Pancreas (tissue), 10 donors: ENCODE measurements at regions of chr22 and their contacts with region 1.

Region 1: DNA sequence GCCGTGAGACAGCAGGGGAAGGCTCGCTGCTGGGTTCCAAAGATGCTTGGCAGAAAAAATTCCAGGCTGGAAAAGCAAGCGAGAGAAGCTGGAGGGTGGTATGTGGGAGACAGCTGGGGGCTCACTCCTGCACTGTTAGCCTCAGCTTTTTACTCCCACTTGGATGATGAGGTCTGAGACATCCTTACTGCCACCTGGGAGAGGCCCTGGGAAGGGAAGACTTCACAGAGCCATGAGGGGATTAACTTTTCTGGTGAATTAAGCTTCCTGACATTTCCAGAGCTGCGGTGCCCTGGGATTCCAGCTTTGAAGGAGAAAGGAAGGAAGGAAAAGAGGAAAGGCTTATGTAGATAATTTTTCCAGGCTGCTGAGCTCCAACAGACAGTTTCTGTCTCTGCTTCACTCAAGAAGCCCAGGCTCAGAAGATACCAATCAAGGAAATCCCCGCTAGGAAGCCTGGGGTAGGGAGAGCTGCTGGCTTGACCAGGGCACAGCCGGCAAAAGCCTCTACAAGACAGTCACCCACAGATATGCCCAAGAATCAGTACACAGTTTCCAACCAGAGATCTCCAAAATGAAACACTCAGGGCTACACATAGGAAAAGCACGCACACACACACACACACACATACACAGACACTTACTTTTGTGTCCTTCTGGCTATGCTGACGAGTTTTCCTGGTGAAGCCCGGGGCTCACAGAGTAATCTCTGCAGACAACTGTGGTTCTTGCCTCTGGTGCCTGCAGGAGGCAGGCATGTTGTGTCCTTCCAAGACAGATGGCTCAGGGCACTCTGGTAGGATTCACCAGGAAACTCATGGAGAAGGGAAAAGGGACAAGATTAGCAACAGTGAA is 907 bp downstream of the MCHR1 start:
- DNase-seq: no peak
- ATAC-seq: no peak
- H3K4me3 ChIP-seq: no peak overlapping the region
- H3K27ac ChIP-seq: no peak overlapping the region
- H3K4me1 ChIP-seq: no peaks in the 10 kb centered on the region
- H3K27me3 ChIP-seq: peaks cover 0 to 7% (median 0%) of the 10 kb centered on the region in 4 donors
- CTCF ChIP-seq: no peak

Region 2: DNA sequence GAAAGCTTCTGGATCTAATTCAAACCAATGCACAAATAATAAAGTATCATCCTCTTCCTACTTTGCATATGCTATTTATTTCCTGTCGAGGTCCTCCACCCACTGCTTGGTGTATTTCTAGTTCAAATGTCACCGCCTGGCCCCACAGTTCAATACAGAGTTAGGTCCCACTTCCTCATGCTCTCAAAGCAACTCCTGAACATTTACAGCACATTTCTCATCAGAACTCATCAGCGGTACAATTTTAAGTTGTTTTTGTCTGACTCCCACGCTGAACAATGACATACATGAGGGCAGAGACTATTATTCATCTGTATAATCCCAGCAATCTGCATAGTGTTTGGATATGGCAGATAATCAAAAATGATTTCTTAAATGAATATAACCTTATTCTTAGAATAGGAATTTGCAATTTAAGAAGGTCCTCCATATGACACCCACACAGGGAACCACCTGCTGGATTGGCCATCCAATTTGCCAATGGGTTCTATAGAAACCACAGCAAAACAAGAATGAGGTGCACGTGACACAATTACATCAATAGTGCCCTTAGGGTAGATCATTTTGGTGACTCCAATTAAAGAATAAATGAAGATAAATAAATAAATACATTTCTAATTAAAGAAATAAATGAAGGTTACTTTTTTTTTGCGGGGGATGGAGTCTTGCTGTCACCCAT is 84.7 kb after region 1 on chr22:
- intact Hi-C with region 1: loop called in 1 of 3 experiments (anchors 5 kb)
- DNase-seq: no peak
- ATAC-seq: no peak
- H3K4me3 ChIP-seq: no peak overlapping the region
- H3K27ac ChIP-seq: no peak overlapping the region
- H3K4me1 ChIP-seq: no peaks in the 10 kb centered on the region
- H3K27me3 ChIP-seq: no peaks in the 10 kb centered on the region
- CTCF ChIP-seq: no peak